ENCODE measurements at regions of chr21 and their contacts with region 1.

Region 1: GRCh38 chr21:44353191-44353970 is at the start of gene TRPM2:
- DNase-seq: peak; percentile 56
- ATAC-seq: peak; percentile 59
- H3K4me3 ChIP-seq: peak within 1 kb of the TSS; percentile 19 to 54 (median 40)
- H3K4me3 Mint-ChIP-seq: peak within 1 kb of the TSS; percentile 87
- H3K27ac ChIP-seq: peak within 1 kb of the TSS in 1 of 2 donors; percentile 56
- H3K27ac Mint-ChIP-seq: peak within 1 kb of the TSS; percentile 72
- H3K4me1 ChIP-seq: peaks cover 49% of the 10 kb centered on the region in 2 donors
- H3K4me1 Mint-ChIP-seq: peaks cover 41% of the 10 kb centered on the region
- H3K27me3 ChIP-seq: peaks cover 0 to 27% (median 11%) of the 10 kb centered on the region in 4 experiments
- H3K27me3 Mint-ChIP-seq: peaks cover 3% of the 10 kb centered on the region
- CTCF ChIP-seq: no peak
- total RNA-seq, gene TRPM2: 1.4 and 1.6 TPM in 2 replicates

Region 2: DNA sequence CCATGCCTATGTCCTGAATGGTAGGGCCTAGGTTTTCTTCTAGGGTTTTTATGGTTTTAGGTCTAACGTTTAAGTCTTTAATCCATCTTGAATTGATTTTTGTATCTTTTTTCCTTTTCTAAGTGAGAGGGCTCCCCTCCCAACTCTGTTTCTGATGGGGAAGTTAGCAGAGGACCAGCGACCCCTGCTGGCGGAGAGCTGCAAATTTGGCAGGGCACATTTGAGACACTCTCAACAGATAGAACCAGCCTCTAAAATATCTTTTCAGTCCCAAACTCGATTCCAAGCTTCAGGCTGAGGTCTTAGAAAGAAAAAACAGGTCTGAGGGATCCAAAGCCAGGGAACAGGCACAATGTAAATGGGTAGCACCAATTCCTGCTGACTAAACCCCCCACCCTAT is 134.4 kb after region 1 on chr21:
- CTCF ChIA-PET with region 1: no interaction called
- POLR2A ChIA-PET with region 1: no interaction called
- intact Hi-C with region 1: loop called (anchors 10 kb)
- DNase-seq: no peak
- ATAC-seq: no peak
- H3K4me3 ChIP-seq: no peak overlapping the region
- H3K4me3 Mint-ChIP-seq: no peak overlapping the region
- H3K27ac ChIP-seq: no peak overlapping the region
- H3K27ac Mint-ChIP-seq: no peak overlapping the region
- H3K4me1 ChIP-seq: no peaks in the 10 kb centered on the region
- H3K4me1 Mint-ChIP-seq: no peaks in the 10 kb centered on the region
- H3K27me3 ChIP-seq: peaks cover 0 to 11% (median 0%) of the 10 kb centered on the region in 4 experiments
- H3K27me3 Mint-ChIP-seq: peaks cover 30% of the 10 kb centered on the region
- CTCF ChIP-seq: peak; percentile 29

Region 3: GRCh38 chr21:45228171-45228641 is 874.8 kb after region 1 on chr21:
- CTCF ChIA-PET with region 1: no interaction called
- POLR2A ChIA-PET with region 1: no interaction called
- intact Hi-C with region 1: no loop called
- DNase-seq: no peak
- ATAC-seq: no peak
- H3K4me3 ChIP-seq: no peak overlapping the region
- H3K4me3 Mint-ChIP-seq: no peak overlapping the region
- H3K27ac ChIP-seq: no peak overlapping the region
- H3K27ac Mint-ChIP-seq: no peak overlapping the region
- H3K4me1 ChIP-seq: peaks cover 3 to 8% of the 10 kb centered on the region in 2 donors
- H3K4me1 Mint-ChIP-seq: peaks cover 27% of the 10 kb centered on the region
- H3K27me3 ChIP-seq: no peaks in the 10 kb centered on the region
- H3K27me3 Mint-ChIP-seq: peaks cover 8% of the 10 kb centered on the region
- CTCF ChIP-seq: no peak